ENCODE measurements at regions of chr5 and their contacts with region 1.

Region 1: DNA sequence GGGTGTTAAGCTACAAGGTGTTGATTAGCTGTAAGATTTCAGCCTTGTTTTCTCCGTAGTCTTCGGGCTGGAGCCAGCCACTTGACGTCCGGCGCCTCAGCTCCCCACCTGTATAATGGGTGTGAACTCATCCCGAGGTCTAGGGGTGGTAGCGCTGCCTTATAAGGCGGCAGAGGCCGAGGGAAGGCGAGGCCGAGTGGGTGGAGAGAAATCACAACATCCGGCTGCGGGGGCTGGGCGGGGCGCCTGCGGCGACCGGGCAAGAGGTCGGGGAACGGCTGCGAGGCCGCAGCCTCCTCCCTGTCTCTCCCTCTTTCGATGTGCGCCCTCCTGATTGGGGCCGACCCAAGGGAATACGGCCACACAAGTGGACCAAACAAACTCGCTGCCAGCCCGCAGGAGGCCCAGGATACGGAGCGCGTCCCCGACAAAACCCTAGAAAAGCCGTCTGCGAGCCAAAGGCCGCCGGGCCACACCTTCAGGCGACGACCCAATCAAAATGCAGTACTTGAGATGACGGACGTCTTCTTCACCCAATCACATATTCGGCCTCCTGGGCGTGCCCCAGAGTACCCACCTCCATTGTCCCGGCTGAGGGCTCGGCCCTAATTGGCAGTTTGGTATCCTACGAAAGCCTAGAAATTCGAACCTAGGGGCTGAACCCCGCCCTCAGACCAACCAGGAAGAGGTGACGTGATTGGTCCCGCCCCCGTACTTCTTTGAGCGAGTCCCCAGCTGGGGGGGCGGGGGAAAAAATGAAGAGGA is 493 bp upstream of the GRK6 start:
- DNase-seq: peak; percentile 89 to 100 (median 100)
- ATAC-seq: peak; percentile 89
- H3K4me3 ChIP-seq: peak overlapping the region; percentile 67
- H3K4me3 Mint-ChIP-seq: peak overlapping the region; percentile 87 to 96 (median 90)
- H3K27ac ChIP-seq: peak overlapping the region; percentile 82
- H3K27ac Mint-ChIP-seq: peak overlapping the region; percentile 92 to 98 (median 96)
- H3K4me1 ChIP-seq: peaks cover 27 to 36% of the 10 kb centered on the region in 2 donors
- H3K4me1 Mint-ChIP-seq: peaks cover 33 to 54% (median 38%) of the 10 kb centered on the region in 7 donors
- H3K27me3 ChIP-seq: no peaks in the 10 kb centered on the region
- H3K27me3 Mint-ChIP-seq: peaks cover 0 to 3% (median 0%) of the 10 kb centered on the region in 5 donors

Region 2: GRCh38 chr5:176501333-176501732 is 924.6 kb before region 1 on chr5:
- CTCF ChIA-PET with region 1: no interaction called
- POLR2A ChIA-PET with region 1: no interaction called
- intact Hi-C with region 1: no loop called
- DNase-seq: no peak
- ATAC-seq: no peak
- H3K4me3 ChIP-seq: no peak overlapping the region
- H3K4me3 Mint-ChIP-seq: no peak overlapping the region
- H3K27ac ChIP-seq: no peak overlapping the region
- H3K27ac Mint-ChIP-seq: no peak overlapping the region
- H3K4me1 ChIP-seq: no peaks in the 10 kb centered on the region
- H3K4me1 Mint-ChIP-seq: peaks cover 0 to 4% (median 0%) of the 10 kb centered on the region in 7 donors
- H3K27me3 ChIP-seq: no peaks in the 10 kb centered on the region
- H3K27me3 Mint-ChIP-seq: no peaks in the 10 kb centered on the region

Region 3: GRCh38 chr5:177086924-177087706 is 338.9 kb before region 1 on chr5:
- CTCF ChIA-PET with region 1: no interaction called
- POLR2A ChIA-PET with region 1: no interaction called
- intact Hi-C with region 1: loop called in 1 of 2 experiments (anchors 1 kb)
- DNase-seq: peak; percentile 60 to 79 (median 71)
- ATAC-seq: peak; percentile 86
- H3K4me3 ChIP-seq: peak overlapping the region; percentile 30
- H3K4me3 Mint-ChIP-seq: peak overlapping the region in 8 of 10 donors; percentile 5 to 80 (median 35)
- H3K27ac ChIP-seq: no peak overlapping the region
- H3K27ac Mint-ChIP-seq: no peak overlapping the region
- H3K4me1 ChIP-seq: peaks cover 4 to 6% of the 10 kb centered on the region in 2 donors
- H3K4me1 Mint-ChIP-seq: peaks cover 10 to 18% (median 11%) of the 10 kb centered on the region in 7 donors
- H3K27me3 ChIP-seq: no peaks in the 10 kb centered on the region
- H3K27me3 Mint-ChIP-seq: peaks cover 0 to 44% (median 8%) of the 10 kb centered on the region in 5 donors

Region 4: DNA sequence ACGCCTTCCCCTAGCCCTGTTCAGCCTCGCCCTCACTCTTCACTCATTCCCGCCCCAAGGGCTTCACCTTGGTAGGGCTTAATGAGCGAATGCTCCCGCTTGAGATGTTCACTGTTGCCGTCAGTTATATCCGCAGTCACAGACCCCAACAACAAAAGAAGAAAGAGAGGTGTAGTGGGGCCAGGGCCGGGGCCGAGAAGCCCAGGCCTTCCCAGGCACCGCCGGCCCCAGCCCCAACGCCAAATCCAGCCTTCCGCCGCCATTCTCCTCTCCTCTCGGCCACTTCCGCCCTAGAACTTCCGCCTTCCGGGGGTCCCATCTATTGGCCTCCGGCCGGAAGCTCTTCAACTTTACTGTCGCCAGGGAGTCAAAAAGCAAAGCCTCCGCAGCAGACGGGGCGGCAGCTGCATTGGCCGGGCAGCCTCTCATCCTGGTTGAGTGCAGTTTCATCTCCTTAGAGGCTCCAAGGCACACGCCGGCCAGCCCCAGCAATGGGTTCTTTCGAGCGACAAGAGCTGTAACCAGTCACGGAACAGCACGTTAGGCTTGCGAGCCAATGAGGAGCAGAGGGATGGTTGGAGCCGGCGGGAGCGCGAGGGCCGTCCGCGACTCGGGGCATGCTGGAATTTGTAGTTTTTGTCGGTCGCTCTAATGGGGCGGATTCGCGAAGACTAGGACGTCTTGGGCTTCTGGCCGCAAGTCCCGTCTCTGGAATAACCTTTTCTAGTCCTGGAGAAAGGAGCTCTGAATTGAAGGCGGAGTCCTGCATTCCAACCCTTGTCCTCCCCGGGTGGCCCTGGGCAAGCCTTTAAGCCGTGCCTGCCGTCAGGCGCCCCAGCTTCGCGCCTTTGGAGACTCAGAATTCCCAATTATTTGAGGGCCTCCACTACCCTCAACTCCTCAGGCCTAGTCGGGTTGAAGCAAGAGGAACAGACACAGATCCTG is 74.3 kb before region 1 on chr5 and contains the start of gene LMAN2:
- CTCF ChIA-PET with region 1: no interaction called
- POLR2A ChIA-PET with region 1: interaction called, 5 read pairs
- intact Hi-C with region 1: loop called in 1 of 2 experiments (anchors 1 kb)
- DNase-seq: peak; percentile 74 to 95 (median 93)
- ATAC-seq: peak; percentile 99
- H3K4me3 ChIP-seq: peak within 1 kb of the TSS; percentile 91
- H3K4me3 Mint-ChIP-seq: peak within 1 kb of the TSS; percentile 93 to 99 (median 98)
- H3K27ac ChIP-seq: peak within 1 kb of the TSS; percentile 95
- H3K27ac Mint-ChIP-seq: peak within 1 kb of the TSS; percentile 93 to 100 (median 99)
- H3K4me1 ChIP-seq: peaks cover 31 to 46% of the 10 kb centered on the region in 2 donors
- H3K4me1 Mint-ChIP-seq: peaks cover 56 to 79% (median 69%) of the 10 kb centered on the region in 7 donors
- H3K27me3 ChIP-seq: no peaks in the 10 kb centered on the region
- H3K27me3 Mint-ChIP-seq: no peaks in the 10 kb centered on the region
- total RNA-seq, gene LMAN2: 71.8 to 144 (median 99.7) TPM

Region 5: GRCh38 chr5:177370488-177371119 is 55.4 kb before region 1 on chr5:
- CTCF ChIA-PET with region 1: interaction called, 4 read pairs
- POLR2A ChIA-PET with region 1: interaction called, 21 read pairs
- intact Hi-C with region 1: no loop called
- DNase-seq: peak in 7 of 9 donors; percentile 36 to 74 (median 65)
- ATAC-seq: peak; percentile 90
- H3K4me3 ChIP-seq: no peak overlapping the region
- H3K4me3 Mint-ChIP-seq: peak overlapping the region in 7 of 10 donors; percentile 20 to 79 (median 64)
- H3K27ac ChIP-seq: peak overlapping the region; percentile 76
- H3K27ac Mint-ChIP-seq: peak overlapping the region in 7 of 9 donors; percentile 33 to 94 (median 86)
- H3K4me1 ChIP-seq: peaks cover 36 to 73% of the 10 kb centered on the region in 2 donors
- H3K4me1 Mint-ChIP-seq: peaks cover 51 to 80% (median 70%) of the 10 kb centered on the region in 7 donors
- H3K27me3 ChIP-seq: no peaks in the 10 kb centered on the region
- H3K27me3 Mint-ChIP-seq: no peaks in the 10 kb centered on the region

Region 6: DNA sequence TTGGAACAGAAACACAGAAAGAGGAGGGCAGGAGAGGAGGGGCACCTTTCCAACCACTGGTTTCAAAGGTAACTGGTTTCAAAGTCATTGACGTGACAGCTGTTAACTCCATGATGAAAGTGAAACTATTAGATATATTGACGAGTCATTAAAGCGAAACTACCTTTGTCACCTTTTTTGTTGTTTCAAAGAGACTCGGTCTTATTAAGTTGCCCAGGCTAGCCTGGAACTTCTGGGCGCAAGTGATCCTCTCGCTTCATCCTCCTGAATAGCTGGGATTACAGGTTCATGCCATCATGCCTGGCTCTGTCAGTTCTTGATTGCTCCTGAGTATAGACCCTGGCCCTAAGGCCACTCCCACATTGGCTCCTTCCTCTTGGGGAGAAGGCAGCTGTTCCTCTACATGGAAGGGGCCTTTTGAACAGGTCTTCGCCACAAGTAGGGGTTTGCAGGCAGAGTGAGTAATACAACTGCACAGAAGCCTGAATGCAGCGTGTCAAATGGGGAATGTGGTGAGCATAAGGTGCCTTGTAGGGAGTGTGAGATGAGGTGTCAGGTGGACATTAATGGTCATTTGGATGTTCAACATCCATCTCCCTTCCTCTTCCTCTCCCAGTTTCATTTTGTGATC is 13.3 kb before region 1 on chr5:
- CTCF ChIA-PET with region 1: interaction called, 10 read pairs
- POLR2A ChIA-PET with region 1: interaction called, 210 read pairs
- intact Hi-C with region 1: loop called in 1 of 2 experiments (anchors 2 kb)
- DNase-seq: no peak
- ATAC-seq: peak; percentile 34
- H3K4me3 ChIP-seq: no peak overlapping the region
- H3K4me3 Mint-ChIP-seq: peak overlapping the region in 2 of 10 donors; percentile 7 to 21
- H3K27ac ChIP-seq: no peak overlapping the region
- H3K27ac Mint-ChIP-seq: peak overlapping the region in 2 of 9 donors; percentile 46 to 55
- H3K4me1 ChIP-seq: peaks cover 14 to 24% of the 10 kb centered on the region in 2 donors
- H3K4me1 Mint-ChIP-seq: peaks cover 8 to 37% (median 26%) of the 10 kb centered on the region in 7 donors
- H3K27me3 ChIP-seq: no peaks in the 10 kb centered on the region
- H3K27me3 Mint-ChIP-seq: peaks cover 0 to 3% (median 0%) of the 10 kb centered on the region in 5 donors

Region 7: DNA sequence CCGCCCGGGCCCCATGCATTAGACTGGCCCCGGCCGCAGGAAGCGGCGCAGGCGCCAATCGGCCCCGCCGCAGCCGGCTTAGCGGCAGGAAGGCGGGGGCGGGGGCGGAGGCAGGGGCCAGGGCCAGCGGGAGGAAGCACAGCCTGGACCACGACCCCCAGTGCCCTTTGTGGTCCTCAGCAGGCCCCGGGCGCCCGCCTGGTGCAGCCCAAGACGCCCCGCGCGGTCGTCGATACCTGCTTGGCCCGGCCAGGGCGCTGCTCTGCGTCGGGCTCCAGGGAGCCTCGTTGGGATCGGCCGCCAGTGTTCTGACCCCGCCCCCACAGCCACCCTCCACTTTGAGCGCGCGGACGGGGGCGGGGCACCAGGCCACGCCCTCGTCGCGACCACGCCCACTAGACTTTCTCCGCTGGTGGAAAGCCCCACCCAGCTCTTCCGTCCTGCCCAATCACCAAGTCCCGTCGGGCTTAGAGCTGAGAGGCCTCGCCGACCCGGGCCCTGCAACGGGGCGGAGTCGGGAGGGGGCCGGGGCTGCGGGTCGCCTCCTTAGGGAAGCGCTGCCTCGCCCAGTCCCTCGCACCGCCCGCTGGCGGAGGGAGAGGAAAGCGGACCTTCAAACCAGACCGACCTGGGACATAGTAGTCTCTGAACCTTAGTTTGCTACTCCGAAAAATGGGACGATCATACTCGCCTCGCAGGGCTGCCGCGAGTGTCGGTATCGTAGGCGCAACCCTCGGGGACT is 71.5 kb after region 1 on chr5 and contains the start of gene PDLIM7:
- CTCF ChIA-PET with region 1: no interaction called
- POLR2A ChIA-PET with region 1: interaction called, 4 read pairs
- intact Hi-C with region 1: loop called (anchors 1 kb)
- DNase-seq: peak; percentile 88 to 97 (median 92)
- ATAC-seq: peak; percentile 92
- H3K4me3 ChIP-seq: peak within 1 kb of the TSS; percentile 77
- H3K4me3 Mint-ChIP-seq: peak within 1 kb of the TSS; percentile 77 to 90 (median 84)
- H3K27ac ChIP-seq: peak within 1 kb of the TSS; percentile 61
- H3K27ac Mint-ChIP-seq: peak within 1 kb of the TSS; percentile 28 to 77 (median 66)
- H3K4me1 ChIP-seq: peaks cover 7 to 10% of the 10 kb centered on the region in 2 donors
- H3K4me1 Mint-ChIP-seq: peaks cover 24 to 44% (median 28%) of the 10 kb centered on the region in 7 donors
- H3K27me3 ChIP-seq: no peaks in the 10 kb centered on the region
- H3K27me3 Mint-ChIP-seq: peaks cover 0 to 24% (median 0%) of the 10 kb centered on the region in 5 donors
- total RNA-seq, gene PDLIM7: 4.1 to 63.2 (median 11.9) TPM

Measured in naive thymus-derived CD4-positive, alpha-beta T cell (primary cell).